ENCODE measurements at regions of chr14 and their contacts with region 1.

Region 1: DNA sequence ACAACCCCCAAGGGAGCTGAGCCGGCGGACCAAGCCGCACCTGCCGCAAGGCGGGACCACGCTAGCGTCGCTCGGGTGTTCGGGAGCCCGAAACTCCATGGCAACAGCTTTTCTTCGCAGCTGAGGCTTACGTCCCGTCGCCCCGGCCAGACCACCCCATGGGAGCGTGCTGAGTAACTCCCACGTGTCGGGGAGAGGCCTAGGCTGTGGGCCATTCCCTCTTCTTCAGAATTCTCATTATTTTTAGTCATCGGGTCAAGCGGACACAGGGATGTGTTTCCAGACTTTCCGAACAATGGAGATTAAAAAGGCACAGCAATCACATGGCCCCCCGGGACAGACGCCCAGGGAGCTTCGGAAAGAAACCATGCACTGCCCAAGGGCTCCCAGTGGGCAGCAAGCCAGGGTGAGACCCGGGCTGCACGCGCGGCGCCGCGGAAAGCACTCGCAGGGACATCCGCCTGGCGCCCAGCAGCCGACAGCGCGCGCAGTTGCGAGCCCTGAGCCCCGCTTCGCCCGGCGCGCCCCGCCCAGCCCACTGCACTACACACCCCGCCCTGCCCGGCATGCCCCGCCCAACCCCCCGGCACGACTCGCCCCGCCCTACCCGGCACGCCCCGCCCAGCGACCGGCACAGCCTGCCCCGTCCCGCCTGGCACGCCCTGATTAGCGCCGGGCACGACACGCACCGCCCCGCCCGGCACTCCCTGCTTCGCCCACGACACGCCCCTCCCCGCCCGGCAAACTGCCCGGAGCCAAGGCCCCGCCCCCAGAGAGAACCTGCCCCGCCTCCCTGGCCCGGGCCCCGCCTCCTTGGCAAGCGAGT is 422 bp upstream of the AK7 start:
- DNase-seq: peak; percentile 97 to 100 (median 100)
- ATAC-seq: peak; percentile 89 to 90
- H3K4me3 Mint-ChIP-seq: peak overlapping the region; percentile 85 to 94 (median 92)
- H3K27ac Mint-ChIP-seq: peak overlapping the region; percentile 53 to 94 (median 89)
- H3K4me1 Mint-ChIP-seq: peaks cover 2 to 8% (median 7%) of the 10 kb centered on the region in 4 donors
- H3K27me3 Mint-ChIP-seq: peaks cover 0 to 3% (median 0%) of the 10 kb centered on the region in 5 donors

Region 2: DNA sequence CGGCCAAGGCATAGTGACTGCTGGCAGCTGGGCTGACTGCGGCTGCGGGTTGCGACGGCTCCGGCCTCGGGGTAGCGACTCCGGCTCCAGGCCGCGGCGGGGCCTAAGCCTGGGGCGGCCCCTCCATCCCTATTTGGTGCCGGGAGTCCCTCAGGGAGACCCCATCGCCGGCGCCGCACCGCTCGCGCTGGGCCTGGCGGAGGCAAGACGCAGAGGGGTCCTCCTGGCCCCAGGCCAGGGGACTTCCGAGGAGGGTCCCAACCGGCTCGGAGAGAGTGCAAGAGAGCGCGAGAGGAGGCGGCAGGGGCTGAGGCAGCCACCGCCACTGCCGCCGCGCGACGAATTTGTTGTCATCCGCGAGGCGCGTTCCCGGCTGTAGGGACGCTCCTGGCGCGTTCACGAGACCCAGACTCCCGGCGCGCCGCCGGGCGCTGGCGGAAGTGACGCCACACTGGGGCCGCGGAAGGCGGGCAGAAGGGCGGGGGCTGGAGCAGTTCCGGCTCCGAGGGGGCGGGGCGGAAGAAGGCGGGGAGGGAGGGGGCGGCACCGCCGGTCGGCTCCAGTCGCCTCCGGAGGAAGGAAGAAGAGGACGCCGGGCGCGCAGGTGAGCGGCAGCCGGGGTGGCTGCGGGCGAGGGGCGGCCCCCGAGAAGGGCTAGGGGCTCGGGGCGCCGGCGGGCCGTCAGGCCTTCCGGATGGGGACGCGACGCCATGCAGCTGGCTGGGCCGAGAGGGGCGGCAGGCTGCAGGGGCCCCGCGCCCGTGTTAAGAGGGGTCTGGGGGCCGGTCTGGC is 28.3 kb before region 1 on chr14 and contains the starts of genes ATG2B and GSKIP:
- POLR2A ChIA-PET with region 1: interaction called, 10 read pairs
- DNase-seq: peak; percentile 94 to 99 (median 98)
- ATAC-seq: peak; percentile 79 to 82
- H3K4me3 Mint-ChIP-seq: peak within 1 kb of the TSS; percentile 86 to 97 (median 92)
- H3K27ac Mint-ChIP-seq: peak within 1 kb of the TSS; percentile 71 to 97 (median 92)
- H3K4me1 Mint-ChIP-seq: peaks cover 18 to 58% (median 57%) of the 10 kb centered on the region in 4 donors
- H3K27me3 Mint-ChIP-seq: no peaks in the 10 kb centered on the region
- polyA plus RNA-seq, gene ATG2B: 0.96 to 2.0 (median 1.4) TPM
- polyA plus RNA-seq, gene GSKIP: 15.6 to 26.9 (median 18.8) TPM

Region 3: GRCh38 chr14:96373538-96373937 is 18.0 kb before region 1 on chr14:
- POLR2A ChIA-PET with region 1: no interaction called
- DNase-seq: no peak
- ATAC-seq: no peak
- H3K4me3 Mint-ChIP-seq: no peak overlapping the region
- H3K27ac Mint-ChIP-seq: no peak overlapping the region
- H3K4me1 Mint-ChIP-seq: peaks cover 7 to 21% (median 16%) of the 10 kb centered on the region in 4 donors
- H3K27me3 Mint-ChIP-seq: no peaks in the 10 kb centered on the region